ENCODE measurements at regions of chr2 and their contacts with region 1.

Region 1: DNA sequence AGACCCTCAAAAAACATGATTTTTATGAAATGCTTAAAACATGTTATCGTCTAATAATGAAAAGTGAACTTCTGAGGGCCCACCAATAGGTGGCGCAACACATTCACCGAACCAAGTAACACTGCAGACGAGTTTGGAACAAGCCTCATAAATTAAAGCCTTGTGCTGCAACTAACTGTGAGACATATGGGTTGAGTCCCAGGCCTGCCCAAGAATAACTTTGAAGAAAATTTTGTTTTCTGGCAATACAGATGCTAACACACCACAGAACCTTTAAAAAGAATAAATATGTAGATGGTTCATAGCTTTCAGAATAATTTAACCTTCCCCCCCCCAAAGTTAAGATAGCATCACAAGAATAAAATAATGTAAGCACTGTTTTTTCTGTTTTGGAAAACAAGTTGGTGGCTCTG is 285.8 kb downstream of the RNF144A start:
- DNase-seq: peak; percentile 33
- H3K4me3 ChIP-seq: no peak overlapping the region
- H3K27ac ChIP-seq: no peak overlapping the region
- H3K4me1 ChIP-seq: no peaks in the 10 kb centered on the region
- H3K27me3 ChIP-seq: no peaks in the 10 kb centered on the region
- CTCF ChIP-seq: peak; percentile 63 to 65
- POLR2A ChIP-seq: no peak

Region 2: DNA sequence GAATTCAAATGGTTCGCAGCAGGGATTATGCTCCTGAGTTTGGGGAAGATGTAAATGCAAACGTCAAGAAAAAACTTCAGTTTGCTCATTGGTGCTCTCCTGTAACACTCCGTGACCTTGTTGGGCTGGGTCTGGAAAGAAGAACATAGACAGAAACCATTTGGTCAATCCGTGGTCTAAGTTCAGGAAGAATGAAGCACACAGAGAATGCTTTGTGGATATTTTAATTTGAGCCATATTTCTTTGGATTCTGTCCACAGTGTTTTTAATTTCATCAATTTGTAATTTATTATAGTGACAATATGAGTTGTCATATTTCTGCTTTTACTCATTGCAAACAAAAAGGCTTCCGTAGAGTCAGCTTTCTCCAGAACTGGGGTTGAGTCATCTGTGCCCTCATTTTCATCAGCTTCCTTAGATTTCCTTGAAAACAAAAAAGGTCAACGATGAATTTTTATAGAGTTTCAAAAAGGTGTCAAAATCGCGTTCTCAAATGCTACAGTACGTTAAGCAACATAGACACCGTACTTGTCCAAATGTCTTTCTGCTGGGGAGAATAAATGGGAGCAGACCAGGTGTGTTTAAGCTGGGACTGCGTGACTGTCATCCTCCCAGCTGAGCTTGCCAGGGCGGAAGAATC is 320.5 kb after region 1 on chr2:
- CTCF ChIA-PET with region 1: no interaction called
- POLR2A ChIA-PET with region 1: no interaction called
- dilution Hi-C with region 1: no loop called
- intact Hi-C with region 1: no loop called
- DNase-seq: no peak
- H3K4me3 ChIP-seq: no peak overlapping the region
- H3K27ac ChIP-seq: no peak overlapping the region
- H3K4me1 ChIP-seq: no peaks in the 10 kb centered on the region
- H3K27me3 ChIP-seq: no peaks in the 10 kb centered on the region
- CTCF ChIP-seq: no peak
- POLR2A ChIP-seq: no peak

Region 3: GRCh38 chr2:7672027-7672684 is 469.1 kb after region 1 on chr2:
- CTCF ChIA-PET with region 1: no interaction called
- POLR2A ChIA-PET with region 1: no interaction called
- dilution Hi-C with region 1: no loop called
- intact Hi-C with region 1: loop called (anchors 5 kb)
- DNase-seq: no peak
- H3K4me3 ChIP-seq: no peak overlapping the region
- H3K27ac ChIP-seq: no peak overlapping the region
- H3K4me1 ChIP-seq: no peaks in the 10 kb centered on the region
- H3K27me3 ChIP-seq: no peaks in the 10 kb centered on the region
- CTCF ChIP-seq: peak; percentile 3 to 22
- POLR2A ChIP-seq: no peak